ENCODE measurements at regions of chr3 and their contacts with region 1.

Region 1: DNA sequence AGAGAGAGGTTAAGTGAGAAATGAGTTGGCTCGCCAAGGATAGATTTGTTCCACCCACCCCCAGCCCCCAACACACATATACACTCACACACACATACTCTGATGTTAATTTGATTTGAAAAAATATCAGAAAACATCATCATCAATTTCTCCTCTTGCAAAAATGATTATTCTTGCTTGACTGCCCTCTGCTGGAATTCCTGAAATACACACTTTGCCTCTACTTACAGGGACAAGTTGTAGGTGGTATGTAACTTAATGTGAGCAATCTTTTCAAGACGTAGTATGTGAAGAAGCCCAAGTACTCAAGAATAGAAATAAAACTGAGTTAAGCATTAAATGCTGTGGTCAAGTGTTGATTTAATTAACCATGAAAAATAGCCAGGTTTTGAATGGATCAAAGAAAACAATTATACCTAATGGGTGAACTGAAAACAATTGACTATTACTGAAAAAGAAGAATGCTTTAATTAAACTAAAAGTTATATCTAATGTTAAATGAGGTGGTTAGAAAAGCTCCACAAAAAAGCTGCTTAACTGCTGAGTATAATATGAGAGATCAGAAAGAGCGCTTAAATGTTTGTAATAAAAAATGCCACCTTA is 46.6 kb upstream of the MDFIC2 start:
- DNase-seq: no peak
- H3K4me3 ChIP-seq: no peak overlapping the region
- H3K27ac ChIP-seq: no peak overlapping the region
- H3K4me1 ChIP-seq: no peaks in the 10 kb centered on the region
- H3K27me3 ChIP-seq: no peaks in the 10 kb centered on the region
- CTCF ChIP-seq: peak; percentile 53 to 65 (median 59)
- EP300 ChIP-seq: no peak
- POLR2A ChIP-seq: no peak

Region 2: GRCh38 chr3:70120357-70121121 is 238.5 kb before region 1 on chr3:
- in situ Hi-C with region 1: loop called (anchors 25 kb)
- intact Hi-C with region 1: no loop called
- DNase-seq: peak; percentile 79
- H3K4me3 ChIP-seq: no peak overlapping the region
- H3K27ac ChIP-seq: no peak overlapping the region
- H3K4me1 ChIP-seq: no peaks in the 10 kb centered on the region
- H3K27me3 ChIP-seq: no peaks in the 10 kb centered on the region
- CTCF ChIP-seq: peak; percentile 57 to 71 (median 67)
- EP300 ChIP-seq: no peak
- POLR2A ChIP-seq: no peak

Region 3: DNA sequence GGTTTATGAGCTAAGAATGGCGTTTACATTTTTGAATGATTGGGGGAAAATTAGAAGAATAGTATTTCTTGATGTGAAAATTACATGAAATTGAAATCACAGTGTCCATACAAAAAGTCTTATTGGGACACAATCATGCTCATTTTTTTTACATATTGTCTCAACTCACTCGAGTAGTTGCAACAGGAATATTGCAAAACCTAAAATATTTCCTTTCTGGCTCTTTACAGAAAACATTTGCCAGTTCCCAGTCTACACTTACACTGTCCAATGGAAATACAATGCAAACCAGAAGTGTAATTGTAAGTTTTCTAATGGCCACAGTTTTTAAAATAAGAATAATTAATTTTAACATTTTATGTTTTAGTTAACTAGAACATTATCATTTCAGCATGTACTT is 221.7 kb before region 1 on chr3:
- in situ Hi-C with region 1: loop called in 1 of 4 experiments (anchors 25 kb)
- intact Hi-C with region 1: no loop called
- DNase-seq: no peak
- H3K4me3 ChIP-seq: no peak overlapping the region
- H3K27ac ChIP-seq: no peak overlapping the region
- H3K4me1 ChIP-seq: no peaks in the 10 kb centered on the region
- H3K27me3 ChIP-seq: no peaks in the 10 kb centered on the region
- CTCF ChIP-seq: no peak
- EP300 ChIP-seq: no peak
- POLR2A ChIP-seq: no peak

Measured in transverse colon (tissue), 4 donors.